Gastrocnemius medialis (tissue), 4 donors: ENCODE measurements at regions of chr20 and their contacts with region 1.

Region 1: DNA sequence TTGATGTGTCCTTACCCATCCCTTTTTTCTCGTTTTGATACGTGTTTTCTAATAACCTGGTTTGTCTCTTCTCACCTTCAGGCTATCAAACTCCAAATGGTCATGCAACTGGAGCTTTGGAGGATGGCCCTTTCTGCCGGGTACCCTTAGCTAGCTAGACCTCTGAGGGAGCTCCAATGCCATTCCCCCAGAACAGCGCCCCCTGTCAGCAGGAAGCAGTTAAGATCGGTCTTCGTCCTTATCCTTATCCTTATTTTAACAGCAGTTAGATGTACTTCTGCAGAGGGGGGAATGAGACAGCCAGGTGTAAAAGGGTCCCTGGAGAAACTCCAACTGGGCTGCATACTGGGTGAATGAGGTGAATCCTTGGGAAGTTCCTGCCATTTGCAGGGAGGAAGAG is 37.2 kb downstream of the SEL1L2 start:
- DNase-seq: no peak
- ATAC-seq: no peak
- H3K4me3 ChIP-seq: no peak overlapping the region
- H3K27ac ChIP-seq: no peak overlapping the region
- H3K4me1 ChIP-seq: no peaks in the 10 kb centered on the region
- H3K27me3 ChIP-seq: no peaks in the 10 kb centered on the region
- CTCF ChIP-seq: no peak
- POLR2A ChIP-seq: no peak

Region 2: DNA sequence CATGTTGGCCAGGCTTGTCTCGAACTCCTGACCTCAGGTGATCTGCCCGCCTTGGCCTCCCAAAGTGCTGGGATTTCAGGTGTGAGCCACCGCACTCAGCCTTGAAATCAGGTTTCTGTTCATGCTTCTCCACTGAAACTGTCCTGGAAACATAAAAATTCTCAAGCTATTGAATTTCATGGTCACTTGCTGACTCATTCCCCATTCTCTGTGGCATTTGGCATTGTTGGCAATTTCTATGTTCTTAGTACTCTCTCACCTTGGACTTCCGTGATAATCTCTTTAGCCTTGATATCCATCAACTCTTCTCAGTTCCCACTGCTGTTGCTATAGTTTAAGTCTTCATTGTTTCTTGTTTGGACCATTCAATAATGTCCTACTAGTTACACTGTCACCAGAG is 31.0 kb after region 1 on chr20:
- in situ Hi-C with region 1: no loop called
- intact Hi-C with region 1: loop called (anchors 1 kb)
- DNase-seq: no peak
- ATAC-seq: no peak
- H3K4me3 ChIP-seq: no peak overlapping the region
- H3K27ac ChIP-seq: no peak overlapping the region
- H3K4me1 ChIP-seq: no peaks in the 10 kb centered on the region
- H3K27me3 ChIP-seq: no peaks in the 10 kb centered on the region
- CTCF ChIP-seq: no peak
- POLR2A ChIP-seq: no peak

Region 3: DNA sequence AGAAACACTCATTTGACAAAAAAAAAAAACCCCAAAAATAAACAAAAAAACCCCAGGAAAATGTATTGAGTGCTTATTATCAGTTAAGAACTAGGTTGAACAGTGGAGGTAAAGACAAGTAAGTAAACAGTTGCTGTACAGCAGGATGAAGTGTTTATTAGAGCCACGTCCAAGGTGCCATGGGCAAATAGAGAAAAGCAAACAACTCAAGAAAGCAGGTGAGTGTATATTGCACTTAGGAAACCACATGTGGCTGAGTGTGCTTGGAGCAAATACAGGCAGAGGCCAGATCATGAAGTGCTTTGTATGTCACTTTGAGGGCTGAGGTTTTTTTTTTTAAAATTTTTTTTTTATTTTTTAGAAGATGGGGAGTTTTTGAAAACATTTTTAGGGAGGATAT is 140.4 kb after region 1 on chr20:
- in situ Hi-C with region 1: no loop called
- intact Hi-C with region 1: no loop called
- DNase-seq: no peak
- ATAC-seq: no peak
- H3K4me3 ChIP-seq: no peak overlapping the region
- H3K27ac ChIP-seq: no peak overlapping the region
- H3K4me1 ChIP-seq: no peaks in the 10 kb centered on the region
- H3K27me3 ChIP-seq: no peaks in the 10 kb centered on the region
- CTCF ChIP-seq: no peak
- POLR2A ChIP-seq: no peak

Region 4: GRCh38 chr20:14337400-14338171 is 384.4 kb after region 1 on chr20 and contains the start of gene FLRT3:
- in situ Hi-C with region 1: no loop called
- intact Hi-C with region 1: no loop called
- DNase-seq: peak; percentile 53 to 68
- ATAC-seq: peak; percentile 91 to 92
- H3K4me3 ChIP-seq: peak within 1 kb of the TSS; percentile 51 to 63 (median 60)
- H3K27ac ChIP-seq: peak within 1 kb of the TSS; percentile 34 to 77 (median 68)
- H3K4me1 ChIP-seq: peaks cover 25 to 27% of the 10 kb centered on the region in 2 donors
- H3K27me3 ChIP-seq: no peaks in the 10 kb centered on the region
- CTCF ChIP-seq: peak; percentile 14 to 61 (median 58)
- POLR2A ChIP-seq: peak; percentile 34 to 75
- total RNA-seq, gene FLRT3: 0.58 to 3.0 (median 1.8) TPM